ENCODE measurements at regions of chr15 and their contacts with region 1.

Region 1: GRCh38 chr15:70569091-70569621 is 194.2 kb downstream of the UACA start:
- DNase-seq: no peak
- ATAC-seq: peak; percentile 71
- H3K4me3 Mint-ChIP-seq: no peak overlapping the region
- H3K27ac Mint-ChIP-seq: no peak overlapping the region
- H3K4me1 Mint-ChIP-seq: peaks cover 6% of the 10 kb centered on the region
- H3K27me3 Mint-ChIP-seq: no peaks in the 10 kb centered on the region
- CTCF ChIP-seq: no peak

Region 2: GRCh38 chr15:70415398-70415797 is 153.8 kb before region 1 on chr15:
- CTCF ChIA-PET with region 1: no interaction called
- POLR2A ChIA-PET with region 1: no interaction called
- DNase-seq: no peak
- ATAC-seq: no peak
- H3K4me3 Mint-ChIP-seq: no peak overlapping the region
- H3K27ac Mint-ChIP-seq: no peak overlapping the region
- H3K4me1 Mint-ChIP-seq: peaks cover 20% of the 10 kb centered on the region
- H3K27me3 Mint-ChIP-seq: no peaks in the 10 kb centered on the region; the same call in none of the 2 replicates
- CTCF ChIP-seq: no peak

Region 3: DNA sequence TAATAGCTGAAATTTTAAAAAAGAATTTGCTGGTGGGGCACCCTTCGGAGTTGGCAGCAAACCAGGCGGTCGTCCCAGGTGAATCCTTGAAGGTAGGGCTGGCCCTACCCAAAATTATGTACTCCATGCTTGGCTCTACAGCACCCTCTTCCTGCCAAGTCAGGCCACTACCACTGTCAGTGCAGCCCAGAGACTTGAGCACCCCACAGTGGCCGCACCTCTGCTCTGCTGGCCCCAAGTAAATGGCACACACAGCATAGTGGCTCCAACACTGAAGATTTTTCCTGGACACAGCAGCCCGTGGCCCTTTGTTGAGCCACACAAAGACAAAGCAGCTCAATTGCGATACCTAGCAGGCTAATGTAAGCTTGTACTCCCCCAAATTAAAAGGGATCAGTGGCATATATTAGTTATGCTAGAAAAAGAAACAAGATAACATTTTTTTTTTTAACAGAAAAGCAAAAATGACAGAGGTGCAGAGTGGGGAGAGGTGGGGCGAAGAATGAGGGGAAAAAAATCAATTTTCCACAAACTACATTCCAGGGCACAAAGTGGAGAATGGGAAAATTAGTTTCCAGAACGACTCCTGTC is 56.3 kb before region 1 on chr15:
- CTCF ChIA-PET with region 1: no interaction called
- POLR2A ChIA-PET with region 1: no interaction called
- DNase-seq: peak; percentile 84
- ATAC-seq: peak; percentile 100
- H3K4me3 Mint-ChIP-seq: no peak overlapping the region
- H3K27ac Mint-ChIP-seq: no peak overlapping the region
- H3K4me1 Mint-ChIP-seq: peaks cover 17% of the 10 kb centered on the region
- H3K27me3 Mint-ChIP-seq: no peaks in the 10 kb centered on the region
- CTCF ChIP-seq: peak; percentile 79

Region 4: DNA sequence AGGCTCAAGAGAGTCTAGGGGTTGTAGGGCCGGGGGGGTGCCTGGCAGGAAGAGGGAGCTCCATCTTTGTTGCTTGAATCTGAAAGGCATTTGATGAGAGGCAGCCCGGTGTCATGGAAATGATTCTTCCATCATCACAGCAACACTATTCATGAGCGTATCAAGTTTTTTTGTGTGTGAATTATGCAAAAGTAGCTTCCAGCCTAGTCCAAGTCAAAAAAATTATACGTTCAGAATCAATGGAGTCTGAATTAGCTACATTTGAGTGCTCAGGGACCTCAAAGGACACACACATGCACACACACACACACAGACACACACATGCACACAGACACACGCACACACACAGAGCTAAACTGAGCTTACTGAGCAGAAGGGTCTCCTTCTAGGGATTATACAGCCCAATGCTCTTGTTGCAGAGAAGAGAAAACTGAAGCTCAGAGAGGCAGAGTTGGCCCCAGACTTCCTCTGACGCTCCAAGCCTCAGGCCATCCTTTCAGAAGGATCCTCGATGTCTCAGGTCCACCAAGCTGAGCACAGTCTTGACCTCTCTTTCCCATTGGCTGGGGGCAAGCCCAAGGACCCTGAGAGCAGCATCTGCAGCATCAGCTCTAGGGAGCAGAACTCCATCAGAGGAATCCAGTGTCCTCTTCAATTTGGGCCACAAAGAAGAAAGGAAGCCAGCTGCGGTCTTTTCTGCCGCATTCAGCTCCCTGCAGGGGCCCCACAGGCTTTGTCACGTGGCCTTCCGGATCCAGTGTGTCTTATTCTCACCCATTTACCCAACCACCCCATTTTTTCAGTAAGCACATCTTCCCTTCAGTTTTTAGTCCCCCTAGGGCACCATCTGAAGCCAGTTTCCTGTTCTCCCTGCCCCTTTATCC is 33.8 kb before region 1 on chr15:
- CTCF ChIA-PET with region 1: interaction called, 10 read pairs
- POLR2A ChIA-PET with region 1: no interaction called
- DNase-seq: no peak
- ATAC-seq: no peak
- H3K4me3 Mint-ChIP-seq: no peak overlapping the region
- H3K27ac Mint-ChIP-seq: no peak overlapping the region
- H3K4me1 Mint-ChIP-seq: peaks cover 27% of the 10 kb centered on the region
- H3K27me3 Mint-ChIP-seq: no peaks in the 10 kb centered on the region
- CTCF ChIP-seq: no peak

Region 5: DNA sequence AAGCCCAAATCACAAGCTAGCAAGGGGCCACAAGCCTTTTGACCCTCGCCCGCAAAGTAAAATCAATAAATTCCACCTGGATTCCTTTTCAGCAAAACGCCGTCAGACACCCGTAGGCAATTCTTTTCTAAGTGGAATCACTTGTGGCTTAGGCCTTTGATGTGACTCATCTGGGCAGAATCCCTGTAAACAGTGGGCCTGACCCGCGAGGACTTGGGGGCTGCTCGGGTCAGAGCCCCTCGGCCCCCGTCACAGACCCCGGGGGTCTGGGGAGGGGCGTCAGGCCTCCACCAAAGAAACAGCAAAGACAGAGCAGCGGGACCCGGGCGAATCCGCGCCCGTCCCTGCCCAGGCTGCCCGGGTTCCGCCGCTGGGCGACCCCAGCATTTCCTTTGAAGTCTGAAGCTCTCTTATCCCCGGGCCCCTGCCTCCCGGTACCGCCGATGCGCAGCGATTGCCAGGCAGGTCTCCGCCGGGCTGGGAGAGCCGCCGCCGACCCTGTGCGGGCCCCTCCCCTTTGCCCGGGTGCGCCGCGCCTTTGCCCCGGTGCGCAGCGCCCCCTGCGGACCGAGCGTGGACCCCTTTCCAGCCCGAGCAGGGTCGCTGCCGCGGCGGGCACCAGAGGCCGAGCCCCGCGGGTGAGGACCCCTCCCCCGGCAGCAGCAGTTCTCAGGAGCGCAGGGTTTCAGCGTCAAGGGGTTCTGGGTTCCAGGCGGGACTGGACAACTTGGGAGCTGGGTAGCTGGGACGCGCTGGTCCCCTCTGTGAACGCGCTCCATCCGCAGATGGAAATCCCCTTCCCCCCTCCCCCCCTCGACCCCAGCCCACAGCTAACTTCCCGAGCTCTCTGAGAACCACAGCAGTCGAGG is 15.9 kb after region 1 on chr15:
- CTCF ChIA-PET with region 1: interaction called, 18 read pairs
- POLR2A ChIA-PET with region 1: interaction called, 4 read pairs
- DNase-seq: peak; percentile 84
- ATAC-seq: peak; percentile 92
- H3K4me3 Mint-ChIP-seq: peak overlapping the region; percentile 69
- H3K27ac Mint-ChIP-seq: no peak overlapping the region
- H3K4me1 Mint-ChIP-seq: peaks cover 22% of the 10 kb centered on the region
- H3K27me3 Mint-ChIP-seq: peaks cover 26% of the 10 kb centered on the region
- CTCF ChIP-seq: peak; percentile 65; the same call in 1 of the 2 replicates